ENCODE measurements at regions of chr15 and their contacts with region 1.

Region 1: GRCh38 chr15:30038667-30039523 is 43.9 kb upstream of the GOLGA8J start:
- DNase-seq: no peak
- ATAC-seq: peak; percentile 82 to 88
- H3K4me3 ChIP-seq: no peak overlapping the region
- H3K27ac ChIP-seq: peak overlapping the region; percentile 3
- H3K4me1 ChIP-seq: peaks cover 3% of the 10 kb centered on the region
- H3K27me3 ChIP-seq: no peaks in the 10 kb centered on the region

Region 2: GRCh38 chr15:29945943-29946596 is 92.8 kb before region 1 on chr15:
- intact Hi-C with region 1: loop called in 1 of 4 experiments (anchors 5 kb)
- DNase-seq: no peak
- ATAC-seq: no peak
- H3K4me3 ChIP-seq: no peak overlapping the region
- H3K27ac ChIP-seq: no peak overlapping the region
- H3K4me1 ChIP-seq: no peaks in the 10 kb centered on the region
- H3K27me3 ChIP-seq: no peaks in the 10 kb centered on the region

Region 3: GRCh38 chr15:29967956-29968889 is 70.7 kb before region 1 on chr15:
- intact Hi-C with region 1: loop called in 1 of 4 experiments (anchors 10 kb)
- DNase-seq: peak in 2 of 3 donors; percentile 52 to 55
- ATAC-seq: peak; percentile 21 to 48
- H3K4me3 ChIP-seq: peak overlapping the region; percentile 96
- H3K27ac ChIP-seq: no peak overlapping the region
- H3K4me1 ChIP-seq: peaks cover 6% of the 10 kb centered on the region
- H3K27me3 ChIP-seq: no peaks in the 10 kb centered on the region